Mammary epithelial cell (primary cell): ENCODE measurements at regions of chr1 and their contacts with region 1.

Region 1: GRCh38 chr1:235513495-235514366 is 9.5 kb upstream of the B3GALNT2 start:
- DNase-seq: peak; percentile 59
- H3K4me3 ChIP-seq: no peak overlapping the region
- H3K27ac ChIP-seq: no peak overlapping the region
- H3K4me1 ChIP-seq: no peaks in the 10 kb centered on the region
- H3K27me3 ChIP-seq: no peaks in the 10 kb centered on the region
- CTCF ChIP-seq: peak; percentile 91 to 95

Region 2: DNA sequence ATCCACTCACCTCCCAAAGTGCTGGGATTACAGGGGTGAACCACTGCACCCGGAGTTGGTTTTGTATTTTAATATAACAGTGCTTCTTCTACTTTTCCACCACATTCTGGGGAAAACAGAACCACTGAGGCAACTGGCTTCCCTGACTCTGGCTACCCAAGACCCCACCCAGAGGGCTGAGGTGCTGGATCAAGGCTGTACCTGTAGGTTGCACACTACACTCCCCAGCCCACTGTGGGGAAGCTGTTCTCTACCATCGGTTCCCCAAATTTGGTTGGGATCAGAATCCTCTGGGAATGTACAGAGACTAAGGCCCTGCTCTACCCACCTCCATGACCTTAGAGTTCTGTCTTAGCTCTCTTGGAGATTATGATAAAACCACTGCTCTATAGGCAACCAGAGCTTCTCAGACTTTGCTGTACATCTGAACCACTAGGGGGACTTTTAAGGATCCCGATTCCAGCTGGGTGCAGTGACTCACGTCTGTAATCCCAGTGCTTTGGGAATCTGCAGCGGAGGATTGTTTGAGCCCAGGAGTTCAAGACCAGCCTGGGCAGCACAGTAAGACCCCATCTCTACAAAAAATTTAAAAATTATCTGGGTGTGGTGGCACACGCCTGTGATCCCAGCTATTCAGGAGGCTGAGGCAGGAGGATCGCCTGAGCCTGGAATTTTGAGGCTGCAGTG is 84.3 kb after region 1 on chr1:
- CTCF ChIA-PET with region 1: interaction called, 3 read pairs
- dilution Hi-C with region 1: no loop called
- in situ Hi-C with region 1: loop called in 1 of 2 experiments (anchors 10 kb)
- intact Hi-C with region 1: loop called (anchors 1 kb)
- DNase-seq: peak; percentile 32
- H3K4me3 ChIP-seq: no peak overlapping the region
- H3K27ac ChIP-seq: no peak overlapping the region
- H3K4me1 ChIP-seq: no peaks in the 10 kb centered on the region
- H3K27me3 ChIP-seq: no peaks in the 10 kb centered on the region
- CTCF ChIP-seq: peak; percentile 43 to 45

Region 3: GRCh38 chr1:235617808-235618207 is 104.1 kb after region 1 on chr1:
- CTCF ChIA-PET with region 1: no interaction called
- dilution Hi-C with region 1: no loop called
- in situ Hi-C with region 1: no loop called
- intact Hi-C with region 1: loop called (anchors 5 kb)
- DNase-seq: peak; percentile 37
- H3K4me3 ChIP-seq: no peak overlapping the region
- H3K27ac ChIP-seq: no peak overlapping the region
- H3K4me1 ChIP-seq: peaks cover 11% of the 10 kb centered on the region
- H3K27me3 ChIP-seq: no peaks in the 10 kb centered on the region
- CTCF ChIP-seq: peak; percentile 43 to 66

Region 4: DNA sequence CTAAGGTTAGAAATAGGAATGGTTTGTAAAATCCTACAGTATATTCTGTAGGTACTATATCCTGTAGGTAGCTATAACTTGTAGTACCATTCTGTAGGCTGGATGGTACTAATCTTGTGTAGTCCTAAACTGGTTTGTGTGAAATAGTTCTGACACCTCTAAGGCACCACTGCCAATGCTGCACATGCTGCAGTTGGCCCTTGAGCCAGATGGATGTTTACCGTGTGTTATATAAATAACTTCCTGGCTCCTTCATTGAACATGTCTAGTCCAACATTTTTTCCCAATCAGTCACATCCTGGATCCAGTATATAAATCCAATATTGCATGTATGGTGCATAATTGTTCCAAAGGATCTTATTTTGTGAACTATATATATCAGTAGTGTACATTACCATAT is 225.4 kb after region 1 on chr1:
- CTCF ChIA-PET with region 1: no interaction called
- dilution Hi-C with region 1: no loop called
- in situ Hi-C with region 1: loop called in 1 of 2 experiments (anchors 25 kb)
- intact Hi-C with region 1: loop called (anchors 5 kb)
- DNase-seq: peak; percentile 17
- H3K4me3 ChIP-seq: no peak overlapping the region
- H3K27ac ChIP-seq: no peak overlapping the region
- H3K4me1 ChIP-seq: peaks cover 8% of the 10 kb centered on the region
- H3K27me3 ChIP-seq: no peaks in the 10 kb centered on the region
- CTCF ChIP-seq: no peak

Region 5: GRCh38 chr1:235783148-235783776 is 269.5 kb after region 1 on chr1:
- CTCF ChIA-PET with region 1: no interaction called
- dilution Hi-C with region 1: no loop called
- in situ Hi-C with region 1: loop called in 1 of 2 experiments (anchors 25 kb)
- intact Hi-C with region 1: loop called (anchors 1 kb)
- DNase-seq: peak; percentile 21
- H3K4me3 ChIP-seq: no peak overlapping the region
- H3K27ac ChIP-seq: no peak overlapping the region
- H3K4me1 ChIP-seq: peaks cover 4% of the 10 kb centered on the region
- H3K27me3 ChIP-seq: no peaks in the 10 kb centered on the region
- CTCF ChIP-seq: peak; percentile 21 to 42

Region 6: GRCh38 chr1:235843461-235843961 is 329.8 kb after region 1 on chr1:
- CTCF ChIA-PET with region 1: no interaction called
- dilution Hi-C with region 1: no loop called
- in situ Hi-C with region 1: no loop called
- intact Hi-C with region 1: loop called (anchors 10 kb)
- DNase-seq: peak; percentile 41
- H3K4me3 ChIP-seq: no peak overlapping the region
- H3K27ac ChIP-seq: no peak overlapping the region
- H3K4me1 ChIP-seq: no peaks in the 10 kb centered on the region
- H3K27me3 ChIP-seq: no peaks in the 10 kb centered on the region
- CTCF ChIP-seq: peak; percentile 67 to 71